HepG2 (cell line): ENCODE measurements at regions of chr4 and their contacts with region 1.

Region 1: DNA sequence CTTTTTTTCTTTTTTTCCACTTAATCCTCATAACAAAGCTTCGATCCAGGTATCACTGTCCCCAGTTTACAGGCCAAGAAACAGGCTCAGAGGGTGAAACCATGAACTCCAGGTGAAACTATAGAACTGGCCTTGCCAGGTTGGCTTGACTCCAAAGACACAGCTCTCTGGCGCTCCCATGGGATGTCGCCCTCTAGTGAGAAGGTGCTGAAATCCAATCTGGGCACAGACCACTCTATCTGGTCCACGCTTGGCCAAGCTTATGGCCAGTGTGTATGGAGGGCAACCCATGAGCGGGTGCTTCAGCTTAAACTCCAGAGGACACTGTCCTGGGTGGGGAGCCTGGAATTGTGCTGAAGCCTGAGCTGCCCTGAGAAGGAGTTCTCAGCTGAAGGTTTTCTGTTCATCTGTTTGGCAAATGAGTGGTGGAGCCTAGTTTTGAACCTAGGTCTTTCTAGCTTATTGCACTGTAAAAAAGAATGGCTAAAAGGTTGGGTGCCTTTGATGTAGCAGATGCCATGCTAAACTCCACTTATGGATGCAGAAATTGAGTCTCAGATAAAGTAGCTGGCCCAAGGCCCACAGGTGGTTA is 70.5 kb downstream of the SEL1L3 start:
- DNase-seq: peak; percentile 51
- ATAC-seq: peak; percentile 99
- H3K4me3 ChIP-seq: no peak overlapping the region
- H3K27ac ChIP-seq: no peak overlapping the region
- H3K4me1 ChIP-seq: no peaks in the 10 kb centered on the region
- H3K27me3 ChIP-seq: no peaks in the 10 kb centered on the region
- CTCF ChIP-seq: peak; percentile 79
- EP300 ChIP-seq: no peak
- POLR2A ChIP-seq: no peak
- RAD21 ChIP-seq: peak; percentile 66

Region 2: GRCh38 chr4:25439918-25440477 is 352.3 kb before region 1 on chr4:
- CTCF ChIA-PET with region 1: interaction called, 4 read pairs
- POLR2A ChIA-PET with region 1: no interaction called
- in situ Hi-C with region 1: no loop called
- intact Hi-C with region 1: loop called (anchors 1 kb)
- DNase-seq: peak; percentile 43
- ATAC-seq: peak; percentile 89
- H3K4me3 ChIP-seq: no peak overlapping the region
- H3K27ac ChIP-seq: no peak overlapping the region
- H3K4me1 ChIP-seq: no peaks in the 10 kb centered on the region
- H3K27me3 ChIP-seq: no peaks in the 10 kb centered on the region
- CTCF ChIP-seq: peak; percentile 81
- EP300 ChIP-seq: no peak
- POLR2A ChIP-seq: no peak
- RAD21 ChIP-seq: no peak; the same call in 1 of the 2 replicates

Region 3: DNA sequence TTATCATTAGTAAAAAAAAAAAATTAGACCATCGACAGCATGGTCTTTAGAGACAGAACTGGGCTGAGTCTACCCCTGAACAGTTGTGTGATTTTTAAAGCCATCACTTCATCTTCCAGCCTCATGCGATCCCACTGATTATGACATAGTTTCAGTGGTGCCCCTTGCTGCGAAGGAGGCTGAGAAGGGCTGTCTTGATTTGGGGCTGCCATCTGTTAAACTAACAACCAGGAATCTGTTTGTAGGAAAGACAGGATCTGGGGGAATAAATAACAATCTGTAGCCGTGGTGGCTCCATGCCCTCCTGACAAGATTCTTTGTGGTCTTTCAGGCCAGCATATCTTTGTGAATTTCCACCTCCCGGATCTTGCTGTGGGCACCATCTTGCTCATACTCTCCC is 119.5 kb before region 1 on chr4:
- CTCF ChIA-PET with region 1: no interaction called
- POLR2A ChIA-PET with region 1: no interaction called
- in situ Hi-C with region 1: no loop called
- intact Hi-C with region 1: no loop called
- DNase-seq: no peak
- ATAC-seq: no peak
- H3K4me3 ChIP-seq: no peak overlapping the region
- H3K27ac ChIP-seq: no peak overlapping the region
- H3K4me1 ChIP-seq: no peaks in the 10 kb centered on the region
- H3K27me3 ChIP-seq: no peaks in the 10 kb centered on the region
- CTCF ChIP-seq: no peak
- EP300 ChIP-seq: no peak
- POLR2A ChIP-seq: no peak
- RAD21 ChIP-seq: no peak

Region 4: GRCh38 chr4:25702848-25703247 is 89.4 kb before region 1 on chr4:
- CTCF ChIA-PET with region 1: no interaction called
- POLR2A ChIA-PET with region 1: no interaction called
- in situ Hi-C with region 1: no loop called
- intact Hi-C with region 1: no loop called
- DNase-seq: no peak
- ATAC-seq: no peak
- H3K4me3 ChIP-seq: no peak overlapping the region
- H3K27ac ChIP-seq: no peak overlapping the region
- H3K4me1 ChIP-seq: no peaks in the 10 kb centered on the region
- H3K27me3 ChIP-seq: peaks cover 0 to 2% of the 10 kb centered on the region in 2 experiments; a peak in 1 of 5 replicates
- CTCF ChIP-seq: no peak
- EP300 ChIP-seq: no peak
- POLR2A ChIP-seq: no peak
- RAD21 ChIP-seq: no peak

Region 5: GRCh38 chr4:26069218-26069617 is 276.9 kb after region 1 on chr4:
- CTCF ChIA-PET with region 1: no interaction called
- POLR2A ChIA-PET with region 1: no interaction called
- in situ Hi-C with region 1: no loop called
- intact Hi-C with region 1: no loop called
- DNase-seq: peak; percentile 6
- ATAC-seq: peak; percentile 76
- H3K4me3 ChIP-seq: no peak overlapping the region
- H3K27ac ChIP-seq: no peak overlapping the region
- H3K4me1 ChIP-seq: no peaks in the 10 kb centered on the region
- H3K27me3 ChIP-seq: no peaks in the 10 kb centered on the region
- CTCF ChIP-seq: peak; percentile 40
- EP300 ChIP-seq: no peak
- POLR2A ChIP-seq: no peak
- RAD21 ChIP-seq: no peak